Transverse colon (tissue), 4 donors: ENCODE measurements at regions of chr3 and their contacts with region 1.

Region 1: GRCh38 chr3:64321747-64322146 is 96.5 kb upstream of the PRICKLE2 start:
- DNase-seq: no peak
- H3K4me3 ChIP-seq: no peak overlapping the region
- H3K27ac ChIP-seq: peak overlapping the region in 1 of 4 donors; percentile 8
- H3K4me1 ChIP-seq: no peaks in the 10 kb centered on the region
- H3K27me3 ChIP-seq: no peaks in the 10 kb centered on the region
- CTCF ChIP-seq: no peak
- EP300 ChIP-seq: no peak
- POLR2A ChIP-seq: no peak

Region 2: DNA sequence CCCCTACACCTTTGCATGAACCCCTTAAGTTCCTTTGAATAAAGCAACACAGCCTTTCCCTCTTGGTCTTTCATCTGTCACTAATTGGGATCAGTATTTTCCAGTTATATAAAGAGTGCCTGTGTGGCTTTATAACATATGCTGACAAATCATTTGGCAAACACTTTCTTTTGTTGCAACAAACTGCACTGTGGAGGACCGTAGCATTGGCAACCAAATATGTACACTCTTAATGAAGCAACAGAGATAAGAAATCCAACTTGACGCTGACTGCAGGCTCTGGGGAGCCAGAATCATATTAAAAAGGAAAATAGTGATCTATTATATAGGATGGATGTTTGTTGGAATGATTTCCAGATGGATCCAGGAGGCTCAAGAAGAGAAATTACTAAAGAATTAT is 23.6 kb after region 1 on chr3:
- in situ Hi-C with region 1: no loop called
- intact Hi-C with region 1: loop called (anchors 1 kb)
- DNase-seq: no peak
- H3K4me3 ChIP-seq: no peak overlapping the region
- H3K27ac ChIP-seq: peak overlapping the region; percentile 68 to 88 (median 82)
- H3K4me1 ChIP-seq: peaks cover 4 to 32% (median 11%) of the 10 kb centered on the region in 4 donors
- H3K27me3 ChIP-seq: no peaks in the 10 kb centered on the region
- CTCF ChIP-seq: no peak
- EP300 ChIP-seq: no peak
- POLR2A ChIP-seq: no peak